ENCODE measurements at regions of chr19 and their contacts with region 1.

Region 1: GRCh38 chr19:55632463-55632834 is 8.1 kb upstream of the ZNF784 start:
- DNase-seq: peak; percentile 94
- ATAC-seq: peak; percentile 53
- H3K4me3 ChIP-seq: no peak overlapping the region
- H3K4me3 Mint-ChIP-seq: peak overlapping the region; percentile 64
- H3K27ac ChIP-seq: peak overlapping the region in 1 of 2 donors; percentile 11
- H3K27ac Mint-ChIP-seq: peak overlapping the region; percentile 43
- H3K4me1 ChIP-seq: peaks cover 20 to 48% of the 10 kb centered on the region in 2 donors
- H3K4me1 Mint-ChIP-seq: peaks cover 41% of the 10 kb centered on the region
- H3K27me3 ChIP-seq: no peaks in the 10 kb centered on the region
- H3K27me3 Mint-ChIP-seq: no peaks in the 10 kb centered on the region
- CTCF ChIP-seq: peak; percentile 71

Region 2: DNA sequence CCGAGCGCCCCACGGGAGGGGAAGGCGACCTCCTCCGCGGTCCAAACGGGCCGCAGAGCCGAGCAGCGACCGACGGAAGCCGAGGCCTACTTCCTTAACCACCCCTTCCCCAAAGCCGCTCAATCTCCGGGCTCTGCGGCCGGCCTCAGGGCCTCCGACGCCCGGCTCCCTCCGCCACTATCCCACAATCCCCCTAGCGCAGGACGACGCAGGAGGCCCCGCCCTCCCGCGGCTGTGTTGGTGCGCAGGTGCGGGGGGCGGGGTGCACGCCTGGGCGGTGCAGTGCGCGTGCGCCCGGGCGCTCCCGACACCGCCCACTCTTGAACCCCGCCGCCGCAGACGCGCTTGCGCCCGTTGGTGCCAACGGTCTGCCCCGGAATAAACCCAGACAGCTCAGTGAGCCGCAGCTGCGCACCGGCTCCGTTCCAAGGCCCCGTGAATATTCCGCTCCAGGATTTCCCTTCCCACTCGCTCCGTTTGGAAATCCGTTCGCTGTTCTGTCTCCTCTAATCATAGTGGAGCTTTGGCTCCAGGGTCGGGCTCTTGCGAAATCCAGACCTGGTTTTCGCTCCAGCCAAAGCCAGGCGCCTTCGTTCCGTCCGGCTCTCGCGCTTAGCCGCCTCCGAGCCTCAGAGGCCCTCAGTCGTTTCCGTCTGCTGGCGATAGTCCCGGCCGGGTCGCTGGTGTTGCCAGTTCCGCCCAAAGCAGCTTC is 373.5 kb before region 1 on chr19 and contains the start of gene PPP6R1:
- CTCF ChIA-PET with region 1: interaction called, 6 read pairs
- POLR2A ChIA-PET with region 1: no interaction called
- intact Hi-C with region 1: loop called (anchors 10 kb)
- DNase-seq: peak; percentile 98
- ATAC-seq: peak; percentile 77
- H3K4me3 ChIP-seq: peak within 1 kb of the TSS; percentile 70 to 90 (median 80)
- H3K4me3 Mint-ChIP-seq: peak within 1 kb of the TSS; percentile 96
- H3K27ac ChIP-seq: peak within 1 kb of the TSS; percentile 67 to 96
- H3K27ac Mint-ChIP-seq: peak within 1 kb of the TSS; percentile 99
- H3K4me1 ChIP-seq: peaks cover 43 to 49% of the 10 kb centered on the region in 2 donors
- H3K4me1 Mint-ChIP-seq: peaks cover 52% of the 10 kb centered on the region
- H3K27me3 ChIP-seq: no peaks in the 10 kb centered on the region
- H3K27me3 Mint-ChIP-seq: no peaks in the 10 kb centered on the region
- CTCF ChIP-seq: no peak
- total RNA-seq, gene PPP6R1: 193 and 195 TPM in 2 replicates

Region 3: GRCh38 chr19:55516878-55517620 is 115.4 kb before region 1 on chr19:
- CTCF ChIA-PET with region 1: interaction called, 132 read pairs
- POLR2A ChIA-PET with region 1: interaction called, 6 read pairs
- intact Hi-C with region 1: loop called (anchors 1 kb)
- DNase-seq: peak; percentile 94
- ATAC-seq: peak; percentile 100
- H3K4me3 ChIP-seq: peak overlapping the region in 4 of 5 experiments; percentile 53 to 60 (median 58)
- H3K4me3 Mint-ChIP-seq: peak overlapping the region; percentile 88
- H3K27ac ChIP-seq: peak overlapping the region; percentile 91 to 93
- H3K27ac Mint-ChIP-seq: peak overlapping the region; percentile 84
- H3K4me1 ChIP-seq: peaks cover 4 to 11% of the 10 kb centered on the region in 2 donors
- H3K4me1 Mint-ChIP-seq: peaks cover 9% of the 10 kb centered on the region
- H3K27me3 ChIP-seq: peaks cover 0 to 8% (median 0%) of the 10 kb centered on the region in 4 experiments
- H3K27me3 Mint-ChIP-seq: peaks cover 8% of the 10 kb centered on the region
- CTCF ChIP-seq: peak; percentile 81

Region 4: DNA sequence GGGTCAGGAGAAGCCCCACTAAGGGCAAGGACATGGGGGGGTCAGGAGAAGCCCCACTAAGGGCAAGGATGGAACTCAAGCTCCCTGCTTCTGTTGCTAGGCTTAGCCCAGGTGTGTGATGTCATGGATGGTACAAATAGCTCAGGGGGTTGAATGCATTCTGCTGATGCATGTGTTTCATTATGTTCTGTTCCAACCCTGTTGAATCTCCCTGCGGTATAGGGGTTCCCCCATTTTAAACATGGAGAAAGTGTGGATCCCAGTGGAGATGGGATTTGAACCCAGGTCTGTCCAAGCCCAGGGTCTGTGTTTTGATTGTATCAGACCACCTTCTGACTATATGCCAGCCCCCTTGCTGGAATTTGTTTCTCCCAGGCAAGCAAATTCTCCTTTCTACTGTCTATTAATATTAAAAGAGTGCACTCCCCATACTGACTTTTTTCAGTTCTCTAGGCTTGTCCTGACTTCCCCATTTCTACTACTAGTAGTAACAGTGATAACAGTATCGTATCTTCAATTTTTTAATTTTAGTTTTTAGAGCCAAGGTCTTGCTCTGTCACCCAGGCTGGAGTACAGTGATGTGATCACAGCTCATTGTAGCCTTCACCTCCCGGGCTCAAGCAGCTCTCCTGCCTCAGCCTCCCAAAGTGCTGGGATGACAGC is 20.3 kb before region 1 on chr19:
- CTCF ChIA-PET with region 1: interaction called, 39 read pairs
- POLR2A ChIA-PET with region 1: interaction called, 3 read pairs
- intact Hi-C with region 1: no loop called
- DNase-seq: peak; percentile 38
- ATAC-seq: peak; percentile 54
- H3K4me3 ChIP-seq: no peak overlapping the region
- H3K4me3 Mint-ChIP-seq: no peak overlapping the region
- H3K27ac ChIP-seq: peak overlapping the region; percentile 58 to 70
- H3K27ac Mint-ChIP-seq: peak overlapping the region; percentile 18
- H3K4me1 ChIP-seq: peaks cover 14 to 18% of the 10 kb centered on the region in 2 donors
- H3K4me1 Mint-ChIP-seq: peaks cover 48% of the 10 kb centered on the region
- H3K27me3 ChIP-seq: no peaks in the 10 kb centered on the region
- H3K27me3 Mint-ChIP-seq: no peaks in the 10 kb centered on the region
- CTCF ChIP-seq: no peak

Region 5: GRCh38 chr19:55674841-55675660 is 42.6 kb after region 1 on chr19 and contains the start of gene EPN1:
- CTCF ChIA-PET with region 1: interaction called, 46 read pairs
- POLR2A ChIA-PET with region 1: interaction called, 4 read pairs
- intact Hi-C with region 1: no loop called
- DNase-seq: peak; percentile 98
- ATAC-seq: peak; percentile 63
- H3K4me3 ChIP-seq: peak within 1 kb of the TSS; percentile 64 to 93 (median 77)
- H3K4me3 Mint-ChIP-seq: peak within 1 kb of the TSS; percentile 95
- H3K27ac ChIP-seq: peak within 1 kb of the TSS; percentile 87 to 93
- H3K27ac Mint-ChIP-seq: peak within 1 kb of the TSS; percentile 91
- H3K4me1 ChIP-seq: peaks cover 44 to 59% of the 10 kb centered on the region in 2 donors
- H3K4me1 Mint-ChIP-seq: peaks cover 70% of the 10 kb centered on the region
- H3K27me3 ChIP-seq: no peaks in the 10 kb centered on the region
- H3K27me3 Mint-ChIP-seq: no peaks in the 10 kb centered on the region
- CTCF ChIP-seq: no peak
- total RNA-seq, gene EPN1: 63.8 and 63.9 TPM in 2 replicates

Region 6: GRCh38 chr19:56314562-56315077 is 682.2 kb after region 1 on chr19 and contains the start of gene ZSCAN5A:
- CTCF ChIA-PET with region 1: no interaction called
- POLR2A ChIA-PET with region 1: no interaction called
- intact Hi-C with region 1: loop called (anchors 10 kb)
- DNase-seq: peak; percentile 99
- ATAC-seq: peak; percentile 77
- H3K4me3 ChIP-seq: peak within 1 kb of the TSS; percentile 67 to 84 (median 80)
- H3K4me3 Mint-ChIP-seq: peak within 1 kb of the TSS; percentile 95
- H3K27ac ChIP-seq: peak within 1 kb of the TSS; percentile 95 to 99
- H3K27ac Mint-ChIP-seq: peak within 1 kb of the TSS; percentile 94
- H3K4me1 ChIP-seq: peaks cover 12 to 13% of the 10 kb centered on the region in 2 donors
- H3K4me1 Mint-ChIP-seq: peaks cover 17% of the 10 kb centered on the region
- H3K27me3 ChIP-seq: no peaks in the 10 kb centered on the region
- H3K27me3 Mint-ChIP-seq: no peaks in the 10 kb centered on the region
- CTCF ChIP-seq: no peak
- total RNA-seq, gene ZSCAN5A: 20.5 and 24.8 TPM in 2 replicates

Measured in B cell (primary cell).